A673 (cell line): ENCODE measurements at regions of chr5 and their contacts with region 1.

Region 1: GRCh38 chr5:143837306-143837848 is 25.4 kb downstream of the HMHB1 start:
- DNase-seq: peak; percentile 96
- H3K4me3 ChIP-seq: no peak overlapping the region
- H3K27ac ChIP-seq: no peak overlapping the region
- H3K4me1 ChIP-seq: peaks cover 19% of the 10 kb centered on the region
- H3K27me3 ChIP-seq: peaks cover 31% of the 10 kb centered on the region
- CTCF ChIP-seq: no peak

Region 2: GRCh38 chr5:143619040-143619622 is 218.2 kb before region 1 on chr5:
- CTCF ChIA-PET with region 1: interaction called, 11 read pairs
- POLR2A ChIA-PET with region 1: no interaction called
- intact Hi-C with region 1: no loop called
- DNase-seq: no peak
- H3K4me3 ChIP-seq: no peak overlapping the region
- H3K27ac ChIP-seq: no peak overlapping the region
- H3K4me1 ChIP-seq: no peaks in the 10 kb centered on the region
- H3K27me3 ChIP-seq: no peaks in the 10 kb centered on the region
- CTCF ChIP-seq: no peak

Region 3: DNA sequence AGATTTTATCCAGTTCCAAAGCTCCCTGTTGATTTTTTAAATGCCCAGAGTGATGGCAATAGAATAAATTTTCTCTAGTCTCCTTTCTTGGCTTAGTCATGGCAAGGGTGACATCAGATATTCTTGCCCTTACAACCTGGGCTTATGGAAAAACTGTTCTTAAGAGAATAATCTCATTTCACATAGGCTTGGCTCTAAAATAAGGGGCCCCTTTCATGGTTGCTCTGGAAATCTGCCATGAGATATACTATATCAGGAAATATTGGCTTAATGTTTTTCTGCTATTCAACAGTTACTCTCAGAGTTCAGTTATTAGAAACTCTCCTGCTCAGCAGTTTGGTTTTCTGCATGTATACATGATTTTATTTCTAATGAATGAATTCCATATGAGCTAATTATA is 17.7 kb before region 1 on chr5:
- CTCF ChIA-PET with region 1: interaction called, 13 read pairs
- POLR2A ChIA-PET with region 1: no interaction called
- intact Hi-C with region 1: no loop called
- DNase-seq: no peak
- H3K4me3 ChIP-seq: no peak overlapping the region
- H3K27ac ChIP-seq: no peak overlapping the region
- H3K4me1 ChIP-seq: no peaks in the 10 kb centered on the region
- H3K27me3 ChIP-seq: no peaks in the 10 kb centered on the region
- CTCF ChIP-seq: no peak

Region 4: DNA sequence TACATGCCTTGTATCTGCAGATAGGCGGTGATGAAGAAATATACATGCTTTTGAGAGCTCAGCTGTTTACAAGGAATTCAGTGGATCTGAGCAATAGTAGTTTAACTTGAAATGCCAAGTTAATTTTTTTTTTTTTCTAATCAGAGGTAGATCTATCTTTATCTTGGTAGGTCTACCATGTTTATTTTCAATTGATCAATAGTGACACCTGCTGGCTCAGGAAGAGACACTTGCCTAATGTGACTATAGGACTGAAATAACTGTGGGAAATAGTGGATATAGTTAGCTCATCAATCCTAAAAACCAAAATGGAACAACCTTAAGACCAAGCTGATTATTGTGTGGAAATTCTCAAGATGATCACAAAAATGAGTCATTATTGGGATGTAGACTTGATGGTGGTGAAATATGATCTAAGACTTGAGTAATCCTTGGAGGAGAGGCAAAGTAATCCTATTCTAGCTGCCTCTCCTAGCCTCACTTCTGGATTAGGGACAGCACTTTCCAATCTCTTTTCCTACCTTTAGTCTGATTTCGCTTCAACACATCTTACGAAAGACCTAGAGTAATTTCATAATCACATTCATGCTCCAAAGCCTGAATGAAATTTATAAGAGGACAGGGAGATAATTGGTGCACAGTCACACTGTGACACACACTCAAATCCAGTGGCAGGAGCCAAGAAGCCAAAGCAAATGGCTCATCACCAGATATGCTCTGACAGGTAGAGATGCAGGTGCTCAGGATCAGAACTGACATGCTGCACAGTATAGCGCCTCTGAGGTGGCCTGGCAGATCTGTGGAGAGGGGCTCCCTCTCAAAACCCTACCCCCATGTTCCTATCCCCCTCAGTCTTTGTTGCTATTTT is 130.9 kb after region 1 on chr5:
- CTCF ChIA-PET with region 1: no interaction called
- POLR2A ChIA-PET with region 1: no interaction called
- intact Hi-C with region 1: loop called (anchors 5 kb)
- DNase-seq: peak; percentile 62
- H3K4me3 ChIP-seq: no peak overlapping the region
- H3K27ac ChIP-seq: no peak overlapping the region
- H3K4me1 ChIP-seq: no peaks in the 10 kb centered on the region
- H3K27me3 ChIP-seq: peaks cover 36% of the 10 kb centered on the region
- CTCF ChIP-seq: peak; percentile 69

Region 5: GRCh38 chr5:144024545-144024944 is 187.2 kb after region 1 on chr5:
- CTCF ChIA-PET with region 1: no interaction called
- POLR2A ChIA-PET with region 1: no interaction called
- intact Hi-C with region 1: no loop called
- DNase-seq: no peak
- H3K4me3 ChIP-seq: no peak overlapping the region
- H3K27ac ChIP-seq: no peak overlapping the region
- H3K4me1 ChIP-seq: peaks cover 7% of the 10 kb centered on the region
- H3K27me3 ChIP-seq: no peaks in the 10 kb centered on the region
- CTCF ChIP-seq: no peak